ENCODE measurements at regions of chr21 and their contacts with region 1.

Region 1: DNA sequence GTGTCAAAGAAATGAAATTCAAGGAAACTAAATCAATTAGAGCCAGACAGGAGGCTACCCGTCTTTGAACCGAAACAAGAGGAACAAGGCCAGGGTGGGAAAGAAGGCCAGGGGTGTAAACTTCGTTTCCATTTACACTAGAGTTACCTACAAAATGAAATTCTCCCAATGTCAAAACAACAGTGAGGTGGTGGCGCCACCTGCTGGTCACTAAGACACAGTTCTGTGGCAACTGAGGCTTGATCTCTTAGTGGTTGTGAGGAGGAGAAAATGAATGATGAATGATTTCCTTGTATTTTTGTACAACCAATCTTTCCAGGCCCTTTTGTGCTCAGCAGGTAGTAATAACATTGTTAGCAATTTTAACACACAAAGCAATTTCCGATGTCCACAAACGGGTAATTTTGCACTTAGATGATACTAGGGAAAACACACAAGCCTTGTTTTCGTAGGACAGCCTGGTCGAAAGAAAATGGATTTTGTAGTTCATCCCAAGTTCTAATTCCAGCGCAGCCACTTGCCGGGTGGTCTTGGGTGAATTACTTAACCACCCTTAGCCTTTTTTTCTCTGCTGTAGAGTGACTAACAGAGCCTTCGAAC is 54.8 kb upstream of the SOD1 start:
- DNase-seq: peak; percentile 56 to 88 (median 68)
- ATAC-seq: peak; percentile 77
- H3K4me3 ChIP-seq: no peak overlapping the region
- H3K4me3 Mint-ChIP-seq: no peak overlapping the region
- H3K27ac ChIP-seq: no peak overlapping the region
- H3K27ac Mint-ChIP-seq: no peak overlapping the region
- H3K4me1 ChIP-seq: peaks cover 4% of the 10 kb centered on the region
- H3K4me1 Mint-ChIP-seq: no peaks in the 10 kb centered on the region
- H3K27me3 ChIP-seq: no peaks in the 10 kb centered on the region
- H3K27me3 Mint-ChIP-seq: peaks cover 8% of the 10 kb centered on the region
- CTCF ChIP-seq: peak; percentile 90

Region 2: GRCh38 chr21:30044445-30045064 is 1560.1 kb before region 1 on chr21:
- CTCF ChIA-PET with region 1: no interaction called
- POLR2A ChIA-PET with region 1: no interaction called
- intact Hi-C with region 1: loop called (anchors 10 kb)
- DNase-seq: peak in 3 of 14 experiments; percentile 5 to 24 (median 7)
- ATAC-seq: no peak
- H3K4me3 ChIP-seq: no peak overlapping the region
- H3K4me3 Mint-ChIP-seq: no peak overlapping the region
- H3K27ac ChIP-seq: no peak overlapping the region
- H3K27ac Mint-ChIP-seq: no peak overlapping the region
- H3K4me1 ChIP-seq: no peaks in the 10 kb centered on the region
- H3K4me1 Mint-ChIP-seq: no peaks in the 10 kb centered on the region
- H3K27me3 ChIP-seq: peaks cover 0 to under 1% of the 10 kb centered on the region in 2 experiments
- H3K27me3 Mint-ChIP-seq: peaks cover 8% of the 10 kb centered on the region
- CTCF ChIP-seq: peak; percentile 94

Region 3: DNA sequence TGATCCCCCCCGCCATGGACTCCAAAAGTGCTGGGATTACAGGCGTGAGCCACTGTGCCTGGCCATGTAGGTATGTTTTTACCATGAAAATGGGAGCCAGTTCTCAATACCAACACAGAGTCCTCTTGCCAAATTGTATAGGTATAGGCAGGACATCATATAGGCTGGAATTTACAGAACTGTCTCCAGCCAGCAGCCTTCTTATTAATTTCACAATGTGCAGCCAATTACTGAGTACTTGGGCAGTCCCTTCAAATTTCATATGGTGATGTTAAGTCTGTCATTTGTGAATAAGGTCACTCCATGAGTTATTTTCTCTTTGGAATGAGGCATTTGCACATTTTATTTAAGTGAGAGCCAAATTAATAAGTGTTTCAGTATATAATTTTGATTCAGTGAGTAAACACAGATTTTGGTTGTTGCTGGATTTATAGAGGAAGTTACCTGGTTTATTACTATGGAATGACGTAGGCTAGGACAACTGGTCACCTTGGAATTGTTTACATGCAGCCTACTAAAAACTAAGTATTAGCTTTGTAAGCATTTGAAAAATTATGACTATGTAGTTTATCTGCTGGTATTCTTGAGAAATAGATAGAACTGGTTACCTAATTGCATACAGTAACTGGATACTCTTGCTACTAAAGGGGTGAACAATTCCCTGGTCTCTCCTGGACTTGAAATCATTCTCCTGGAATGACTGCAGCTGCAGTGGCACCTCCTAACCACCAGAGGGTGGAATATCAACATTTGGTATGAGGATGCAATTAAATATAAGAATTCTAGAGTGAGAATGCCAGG is 1264.0 kb before region 1 on chr21:
- CTCF ChIA-PET with region 1: no interaction called
- POLR2A ChIA-PET with region 1: no interaction called
- intact Hi-C with region 1: loop called (anchors 5 to 10 kb)
- DNase-seq: peak in 9 of 14 experiments; percentile 0 to 42 (median 18)
- ATAC-seq: no peak
- H3K4me3 ChIP-seq: no peak overlapping the region
- H3K4me3 Mint-ChIP-seq: no peak overlapping the region
- H3K27ac ChIP-seq: no peak overlapping the region
- H3K27ac Mint-ChIP-seq: no peak overlapping the region
- H3K4me1 ChIP-seq: no peaks in the 10 kb centered on the region
- H3K4me1 Mint-ChIP-seq: no peaks in the 10 kb centered on the region
- H3K27me3 ChIP-seq: no peaks in the 10 kb centered on the region
- H3K27me3 Mint-ChIP-seq: peaks cover 9% of the 10 kb centered on the region
- CTCF ChIP-seq: peak; percentile 63

Region 4: DNA sequence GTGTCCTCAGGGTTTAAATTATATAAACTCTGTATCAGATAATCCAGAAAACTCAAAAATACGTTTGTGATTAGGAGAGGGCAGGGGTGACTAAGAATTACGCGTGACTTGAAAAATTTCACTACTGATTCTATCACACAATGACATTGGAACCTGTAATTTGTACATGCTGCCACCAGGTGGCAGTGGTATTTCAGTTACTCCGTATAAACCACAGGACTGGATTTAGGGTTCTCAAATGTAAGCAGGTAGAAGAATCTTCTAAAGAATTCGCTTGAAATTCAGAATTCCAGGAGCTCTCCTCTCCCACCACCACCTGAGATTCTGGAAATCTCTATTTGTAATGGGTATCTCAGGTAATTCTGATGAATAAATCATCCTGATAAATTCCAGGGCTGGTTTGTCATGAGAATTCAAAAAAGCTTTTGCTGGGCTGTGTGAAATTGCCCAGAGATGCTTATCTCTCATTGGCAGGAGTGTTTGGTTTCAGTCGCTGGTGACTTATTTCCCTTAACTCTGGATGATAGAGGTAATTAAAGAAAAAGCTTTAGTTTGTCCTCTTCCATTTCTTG is 773.4 kb before region 1 on chr21:
- CTCF ChIA-PET with region 1: no interaction called
- POLR2A ChIA-PET with region 1: no interaction called
- intact Hi-C with region 1: loop called (anchors 2 to 5 kb)
- DNase-seq: peak in 8 of 14 experiments; percentile 2 to 61 (median 24)
- ATAC-seq: no peak
- H3K4me3 ChIP-seq: no peak overlapping the region
- H3K4me3 Mint-ChIP-seq: no peak overlapping the region
- H3K27ac ChIP-seq: no peak overlapping the region
- H3K27ac Mint-ChIP-seq: no peak overlapping the region
- H3K4me1 ChIP-seq: no peaks in the 10 kb centered on the region
- H3K4me1 Mint-ChIP-seq: no peaks in the 10 kb centered on the region
- H3K27me3 ChIP-seq: peaks cover 3 to 6% of the 10 kb centered on the region in 2 experiments
- H3K27me3 Mint-ChIP-seq: peaks cover 18% of the 10 kb centered on the region
- CTCF ChIP-seq: peak; percentile 36

Region 5: DNA sequence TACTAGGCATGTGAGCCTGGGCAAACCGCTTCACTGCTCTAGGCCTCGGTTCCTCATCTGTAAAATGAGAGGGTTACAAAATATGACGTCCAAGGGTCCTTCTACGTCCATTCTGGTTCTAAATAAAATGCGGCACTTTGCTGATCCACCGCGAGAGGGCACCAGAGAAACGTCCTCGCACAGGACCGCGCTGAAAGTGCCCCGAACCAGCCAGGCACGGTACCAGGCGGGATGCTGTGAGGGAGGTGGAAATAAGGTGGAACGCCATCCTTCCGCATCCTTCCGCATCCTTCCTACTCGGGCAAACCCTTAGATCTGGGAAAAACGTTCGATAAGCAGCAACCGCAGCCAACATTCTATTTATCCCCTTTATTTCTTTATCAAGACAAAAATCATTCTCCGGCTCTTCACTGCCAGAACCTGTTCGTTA is 506.1 kb before region 1 on chr21:
- CTCF ChIA-PET with region 1: interaction called, 3 read pairs
- POLR2A ChIA-PET with region 1: no interaction called
- intact Hi-C with region 1: loop called (anchors 1 kb)
- DNase-seq: peak; percentile 53 to 86 (median 68)
- ATAC-seq: peak; percentile 89
- H3K4me3 ChIP-seq: no peak overlapping the region
- H3K4me3 Mint-ChIP-seq: no peak overlapping the region
- H3K27ac ChIP-seq: no peak overlapping the region
- H3K27ac Mint-ChIP-seq: no peak overlapping the region
- H3K4me1 ChIP-seq: peaks cover 26% of the 10 kb centered on the region
- H3K4me1 Mint-ChIP-seq: peaks cover 30% of the 10 kb centered on the region
- H3K27me3 ChIP-seq: no peaks in the 10 kb centered on the region
- H3K27me3 Mint-ChIP-seq: no peaks in the 10 kb centered on the region
- CTCF ChIP-seq: peak; percentile 93

Region 6: DNA sequence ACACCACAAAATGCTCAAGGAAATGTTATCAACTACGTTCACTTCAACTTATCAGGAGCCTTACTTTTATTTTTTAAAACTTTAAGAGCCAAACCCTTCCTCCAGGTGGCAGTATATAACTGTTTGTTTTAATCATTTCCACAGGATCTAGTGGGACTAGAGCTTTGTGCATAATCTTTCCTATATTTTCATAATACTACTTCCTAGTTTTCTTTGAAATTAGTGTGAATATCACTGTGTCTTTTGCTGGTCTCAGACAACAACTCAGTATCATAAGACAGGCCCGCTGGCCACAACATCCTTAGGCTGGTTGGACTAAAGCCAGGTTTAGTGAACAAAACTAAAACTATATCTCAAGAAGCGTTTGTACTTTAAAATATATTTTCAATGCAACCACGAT is 406.1 kb before region 1 on chr21:
- CTCF ChIA-PET with region 1: no interaction called
- POLR2A ChIA-PET with region 1: no interaction called
- intact Hi-C with region 1: loop called (anchors 1 kb)
- DNase-seq: peak in 3 of 14 experiments; percentile 66 to 72 (median 66)
- ATAC-seq: peak; percentile 56
- H3K4me3 ChIP-seq: no peak overlapping the region
- H3K4me3 Mint-ChIP-seq: peak overlapping the region; percentile 8
- H3K27ac ChIP-seq: no peak overlapping the region
- H3K27ac Mint-ChIP-seq: peak overlapping the region; percentile 38
- H3K4me1 ChIP-seq: peaks cover 7% of the 10 kb centered on the region
- H3K4me1 Mint-ChIP-seq: peaks cover 47% of the 10 kb centered on the region
- H3K27me3 ChIP-seq: no peaks in the 10 kb centered on the region
- H3K27me3 Mint-ChIP-seq: no peaks in the 10 kb centered on the region
- CTCF ChIP-seq: peak; percentile 73

Region 7: GRCh38 chr21:31410499-31411131 is 194.1 kb before region 1 on chr21:
- CTCF ChIA-PET with region 1: no interaction called
- POLR2A ChIA-PET with region 1: no interaction called
- intact Hi-C with region 1: no loop called
- DNase-seq: peak in 7 of 14 experiments; percentile 9 to 48 (median 39)
- ATAC-seq: peak; percentile 80
- H3K4me3 ChIP-seq: no peak overlapping the region
- H3K4me3 Mint-ChIP-seq: no peak overlapping the region
- H3K27ac ChIP-seq: no peak overlapping the region
- H3K27ac Mint-ChIP-seq: no peak overlapping the region
- H3K4me1 ChIP-seq: peaks cover 9% of the 10 kb centered on the region
- H3K4me1 Mint-ChIP-seq: peaks cover 13% of the 10 kb centered on the region
- H3K27me3 ChIP-seq: no peaks in the 10 kb centered on the region
- H3K27me3 Mint-ChIP-seq: no peaks in the 10 kb centered on the region
- CTCF ChIP-seq: no peak

Region 8: GRCh38 chr21:31548688-31549087 is 56.0 kb before region 1 on chr21:
- CTCF ChIA-PET with region 1: no interaction called
- POLR2A ChIA-PET with region 1: no interaction called
- intact Hi-C with region 1: no loop called
- DNase-seq: no peak
- ATAC-seq: no peak
- H3K4me3 ChIP-seq: no peak overlapping the region
- H3K4me3 Mint-ChIP-seq: no peak overlapping the region
- H3K27ac ChIP-seq: no peak overlapping the region
- H3K27ac Mint-ChIP-seq: no peak overlapping the region
- H3K4me1 ChIP-seq: peaks cover under 1% of the 10 kb centered on the region
- H3K4me1 Mint-ChIP-seq: no peaks in the 10 kb centered on the region
- H3K27me3 ChIP-seq: no peaks in the 10 kb centered on the region
- H3K27me3 Mint-ChIP-seq: no peaks in the 10 kb centered on the region
- CTCF ChIP-seq: no peak